ENCODE measurements at regions of chr10 and their contacts with region 1.

Region 1: GRCh38 chr10:96586419-96587263 is at the start of gene TM9SF3:
- DNase-seq: peak; percentile 98
- total RNA-seq, gene TM9SF3: 122 to 137 TPM

Region 2: GRCh38 chr10:96107623-96108038 is 479.0 kb before region 1 on chr10:
- intact Hi-C with region 1: loop called in 1 of 2 experiments (anchors 5 kb)
- DNase-seq: no peak

Region 3: GRCh38 chr10:96831867-96832720 is 245.5 kb after region 1 on chr10 and contains the start of gene LCOR:
- intact Hi-C with region 1: loop called in 1 of 2 experiments (anchors 2 kb)
- DNase-seq: peak; percentile 95
- total RNA-seq, gene LCOR: 20.9 to 36.0 TPM

Measured in posterior vena cava (tissue), 2 donors.